ENCODE measurements at regions of chr4 and their contacts with region 1.

Region 1: GRCh38 chr4:7843831-7844593 is 95.6 kb downstream of the AFAP1 start:
- DNase-seq: peak; percentile 50 to 84 (median 66)
- ATAC-seq: peak; percentile 89
- H3K4me3 ChIP-seq: no peak overlapping the region
- H3K4me3 Mint-ChIP-seq: no peak overlapping the region
- H3K27ac ChIP-seq: no peak overlapping the region
- H3K27ac Mint-ChIP-seq: no peak overlapping the region
- H3K4me1 ChIP-seq: peaks cover 16% of the 10 kb centered on the region
- H3K4me1 Mint-ChIP-seq: peaks cover 31% of the 10 kb centered on the region
- H3K27me3 ChIP-seq: no peaks in the 10 kb centered on the region
- H3K27me3 Mint-ChIP-seq: no peaks in the 10 kb centered on the region
- CTCF ChIP-seq: peak; percentile 76

Region 2: DNA sequence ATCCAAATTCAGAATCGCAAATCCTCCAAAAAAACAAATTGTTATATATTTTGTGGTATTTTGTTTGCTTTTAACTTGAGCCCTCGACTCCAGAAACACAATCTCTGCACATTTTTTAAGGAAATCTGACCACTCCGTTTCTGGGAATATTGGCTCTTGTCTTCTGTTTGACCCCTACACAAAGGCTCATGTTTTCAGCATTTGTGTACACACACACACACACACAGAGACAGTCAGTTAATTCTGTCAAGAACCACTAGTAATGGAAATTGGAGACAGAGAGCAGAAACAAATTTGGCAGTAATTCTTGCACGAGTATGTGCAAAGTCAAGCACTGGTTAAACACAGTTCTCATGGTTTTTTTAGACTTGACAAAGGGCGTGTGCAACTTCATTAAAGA is 19.8 kb before region 1 on chr4:
- CTCF ChIA-PET with region 1: interaction called, 7 read pairs
- POLR2A ChIA-PET with region 1: interaction called, 4 read pairs
- intact Hi-C with region 1: loop called in 1 of 2 experiments (anchors 2 kb)
- DNase-seq: no peak
- ATAC-seq: no peak
- H3K4me3 ChIP-seq: no peak overlapping the region
- H3K4me3 Mint-ChIP-seq: no peak overlapping the region
- H3K27ac ChIP-seq: no peak overlapping the region
- H3K27ac Mint-ChIP-seq: no peak overlapping the region
- H3K4me1 ChIP-seq: peaks cover 18% of the 10 kb centered on the region
- H3K4me1 Mint-ChIP-seq: peaks cover 19% of the 10 kb centered on the region
- H3K27me3 ChIP-seq: no peaks in the 10 kb centered on the region
- H3K27me3 Mint-ChIP-seq: no peaks in the 10 kb centered on the region
- CTCF ChIP-seq: no peak

Region 3: GRCh38 chr4:7831330-7831729 is 12.7 kb before region 1 on chr4:
- CTCF ChIA-PET with region 1: interaction called, 12 read pairs
- POLR2A ChIA-PET with region 1: interaction called, 4 read pairs
- intact Hi-C with region 1: no loop called
- DNase-seq: peak in 6 of 14 experiments; percentile 17 to 66 (median 56)
- ATAC-seq: peak; percentile 58
- H3K4me3 ChIP-seq: peak overlapping the region; percentile 24
- H3K4me3 Mint-ChIP-seq: peak overlapping the region; percentile 81
- H3K27ac ChIP-seq: peak overlapping the region; percentile 43 to 76
- H3K27ac Mint-ChIP-seq: peak overlapping the region; percentile 84
- H3K4me1 ChIP-seq: peaks cover 40% of the 10 kb centered on the region
- H3K4me1 Mint-ChIP-seq: peaks cover 57% of the 10 kb centered on the region
- H3K27me3 ChIP-seq: no peaks in the 10 kb centered on the region
- H3K27me3 Mint-ChIP-seq: no peaks in the 10 kb centered on the region
- CTCF ChIP-seq: no peak

Region 4: GRCh38 chr4:7857238-7857701 is 13.3 kb after region 1 on chr4:
- CTCF ChIA-PET with region 1: interaction called, 11 read pairs
- POLR2A ChIA-PET with region 1: interaction called, 7 read pairs
- intact Hi-C with region 1: no loop called
- DNase-seq: no peak
- ATAC-seq: no peak
- H3K4me3 ChIP-seq: no peak overlapping the region
- H3K4me3 Mint-ChIP-seq: no peak overlapping the region
- H3K27ac ChIP-seq: no peak overlapping the region
- H3K27ac Mint-ChIP-seq: peak overlapping the region; percentile 93
- H3K4me1 ChIP-seq: peaks cover 54% of the 10 kb centered on the region
- H3K4me1 Mint-ChIP-seq: peaks cover 61% of the 10 kb centered on the region
- H3K27me3 ChIP-seq: no peaks in the 10 kb centered on the region
- H3K27me3 Mint-ChIP-seq: no peaks in the 10 kb centered on the region
- CTCF ChIP-seq: no peak

Region 5: GRCh38 chr4:7876201-7876875 is 32.3 kb after region 1 on chr4:
- CTCF ChIA-PET with region 1: interaction called, 11 read pairs
- POLR2A ChIA-PET with region 1: no interaction called
- intact Hi-C with region 1: no loop called
- DNase-seq: peak in 12 of 14 experiments; percentile 23 to 66 (median 44)
- ATAC-seq: peak; percentile 77
- H3K4me3 ChIP-seq: peak overlapping the region; percentile 28
- H3K4me3 Mint-ChIP-seq: peak overlapping the region; percentile 62
- H3K27ac ChIP-seq: peak overlapping the region; percentile 17 to 60
- H3K27ac Mint-ChIP-seq: peak overlapping the region; percentile 66
- H3K4me1 ChIP-seq: peaks cover 28% of the 10 kb centered on the region
- H3K4me1 Mint-ChIP-seq: peaks cover 64% of the 10 kb centered on the region
- H3K27me3 ChIP-seq: no peaks in the 10 kb centered on the region
- H3K27me3 Mint-ChIP-seq: no peaks in the 10 kb centered on the region
- CTCF ChIP-seq: peak; percentile 16